Breast epithelium (tissue), 4 donors: ENCODE measurements at regions of chr16 and their contacts with region 1.

Region 1: GRCh38 chr16:73823205-73823849 is 473.3 kb upstream of the PSMD7 start:
- DNase-seq: no peak
- H3K4me3 ChIP-seq: no peak overlapping the region
- H3K27ac ChIP-seq: no peak overlapping the region
- H3K4me1 ChIP-seq: no peaks in the 10 kb centered on the region
- H3K27me3 ChIP-seq: no peaks in the 10 kb centered on the region
- CTCF ChIP-seq: no peak
- POLR2A ChIP-seq: no peak

Region 2: DNA sequence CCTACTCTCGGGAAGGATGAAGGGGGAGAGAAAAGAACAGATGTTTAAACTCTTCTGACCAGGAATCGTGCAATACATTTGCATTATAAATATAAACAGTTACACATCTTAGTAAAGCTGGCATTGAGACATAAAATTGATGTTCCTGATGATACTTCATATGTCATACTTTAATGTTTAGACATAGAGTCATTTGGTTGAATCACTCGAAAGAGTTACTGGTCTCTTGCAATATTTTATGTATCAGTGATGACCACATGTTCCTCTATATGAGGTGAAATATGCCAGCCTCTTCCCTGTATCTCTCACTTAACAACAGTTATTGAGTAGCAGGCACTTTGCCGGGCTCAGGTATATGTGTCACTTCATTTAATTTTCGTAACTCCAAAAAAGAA is 1601.7 kb before region 1 on chr16:
- intact Hi-C with region 1: loop called (anchors 10 kb)
- DNase-seq: no peak
- H3K4me3 ChIP-seq: no peak overlapping the region
- H3K27ac ChIP-seq: no peak overlapping the region
- H3K4me1 ChIP-seq: no peaks in the 10 kb centered on the region
- H3K27me3 ChIP-seq: no peaks in the 10 kb centered on the region
- CTCF ChIP-seq: no peak
- POLR2A ChIP-seq: no peak

Region 3: DNA sequence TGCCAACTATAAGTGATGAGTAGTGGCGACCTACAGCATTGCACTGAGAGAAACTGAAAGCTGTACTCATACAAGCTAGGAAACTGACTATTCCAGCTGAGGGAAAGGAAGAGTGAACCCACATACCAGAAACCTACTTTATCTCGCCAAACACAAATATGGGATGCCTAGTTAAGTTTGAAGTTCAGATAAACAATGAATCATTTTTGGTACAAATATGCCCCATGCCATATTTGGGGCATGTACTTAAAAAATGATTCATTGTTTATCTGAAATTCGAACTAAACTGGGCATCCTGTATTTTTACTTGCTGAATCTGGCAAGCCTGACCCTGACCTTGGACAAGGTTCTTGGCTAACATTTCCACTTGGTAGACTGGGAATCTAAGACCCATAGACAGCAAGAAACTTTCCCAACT is 54.5 kb before region 1 on chr16:
- intact Hi-C with region 1: no loop called
- DNase-seq: no peak
- H3K4me3 ChIP-seq: no peak overlapping the region
- H3K27ac ChIP-seq: no peak overlapping the region
- H3K4me1 ChIP-seq: no peaks in the 10 kb centered on the region
- H3K27me3 ChIP-seq: no peaks in the 10 kb centered on the region
- CTCF ChIP-seq: no peak
- POLR2A ChIP-seq: no peak

Region 4: DNA sequence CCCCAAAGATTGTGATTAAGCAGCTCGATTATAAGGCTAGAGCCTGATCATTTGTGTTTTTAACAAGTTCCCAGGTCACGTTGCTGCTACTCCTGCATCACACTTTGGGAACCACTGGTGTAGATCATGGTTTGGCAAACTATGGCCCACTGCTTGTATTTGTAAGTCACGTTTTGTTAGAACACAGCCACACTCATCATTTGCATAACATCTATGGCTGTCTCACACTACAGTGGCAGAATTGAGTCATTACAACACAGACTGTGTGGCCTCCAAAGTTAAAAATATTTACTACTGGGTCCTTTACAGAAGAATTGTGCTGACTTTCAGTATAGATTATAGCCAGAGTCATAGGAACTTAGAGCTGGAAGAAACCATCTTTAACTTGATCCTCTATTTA is 42.0 kb before region 1 on chr16:
- intact Hi-C with region 1: no loop called
- DNase-seq: no peak
- H3K4me3 ChIP-seq: no peak overlapping the region
- H3K27ac ChIP-seq: no peak overlapping the region
- H3K4me1 ChIP-seq: no peaks in the 10 kb centered on the region
- H3K27me3 ChIP-seq: no peaks in the 10 kb centered on the region
- CTCF ChIP-seq: no peak
- POLR2A ChIP-seq: no peak